ENCODE measurements at regions of chr17 and their contacts with region 1.

Region 1: GRCh38 chr17:2336215-2336851 is at the start of gene TSR1:
- DNase-seq: peak; percentile 52
- ATAC-seq: peak; percentile 93
- H3K4me3 ChIP-seq: peak within 1 kb of the TSS; percentile 77 to 99
- H3K27ac ChIP-seq: peak within 1 kb of the TSS; percentile 97
- H3K4me1 ChIP-seq: peaks cover 16% of the 10 kb centered on the region
- H3K27me3 ChIP-seq: no peaks in the 10 kb centered on the region
- CTCF ChIP-seq: no peak; the same call in 1 of the 2 replicates
- total RNA-seq, gene TSR1: 44.7 TPM

Region 2: GRCh38 chr17:2401426-2402221 is 65.3 kb after region 1 on chr17:
- CTCF ChIA-PET with region 1: no interaction called
- POLR2A ChIA-PET with region 1: interaction called, 17 read pairs
- in situ Hi-C with region 1: no loop called
- intact Hi-C with region 1: no loop called
- DNase-seq: peak; percentile 94
- ATAC-seq: peak; percentile 75
- H3K4me3 ChIP-seq: peak overlapping the region; percentile 64 to 89
- H3K27ac ChIP-seq: peak overlapping the region; percentile 84
- H3K4me1 ChIP-seq: peaks cover 16% of the 10 kb centered on the region
- H3K27me3 ChIP-seq: no peaks in the 10 kb centered on the region
- CTCF ChIP-seq: no peak

Measured in Panc1 (cell line).